Activated naive CD4-positive, alpha-beta T cell treated with anti-CD3 and anti-CD28 coated beads, Interleukin-2, amount 10 ng/mL, durations not matched to agents 7 days and 5 days (primary cell): ENCODE measurements at regions of chr11 and their contacts with region 1.

Region 1: DNA sequence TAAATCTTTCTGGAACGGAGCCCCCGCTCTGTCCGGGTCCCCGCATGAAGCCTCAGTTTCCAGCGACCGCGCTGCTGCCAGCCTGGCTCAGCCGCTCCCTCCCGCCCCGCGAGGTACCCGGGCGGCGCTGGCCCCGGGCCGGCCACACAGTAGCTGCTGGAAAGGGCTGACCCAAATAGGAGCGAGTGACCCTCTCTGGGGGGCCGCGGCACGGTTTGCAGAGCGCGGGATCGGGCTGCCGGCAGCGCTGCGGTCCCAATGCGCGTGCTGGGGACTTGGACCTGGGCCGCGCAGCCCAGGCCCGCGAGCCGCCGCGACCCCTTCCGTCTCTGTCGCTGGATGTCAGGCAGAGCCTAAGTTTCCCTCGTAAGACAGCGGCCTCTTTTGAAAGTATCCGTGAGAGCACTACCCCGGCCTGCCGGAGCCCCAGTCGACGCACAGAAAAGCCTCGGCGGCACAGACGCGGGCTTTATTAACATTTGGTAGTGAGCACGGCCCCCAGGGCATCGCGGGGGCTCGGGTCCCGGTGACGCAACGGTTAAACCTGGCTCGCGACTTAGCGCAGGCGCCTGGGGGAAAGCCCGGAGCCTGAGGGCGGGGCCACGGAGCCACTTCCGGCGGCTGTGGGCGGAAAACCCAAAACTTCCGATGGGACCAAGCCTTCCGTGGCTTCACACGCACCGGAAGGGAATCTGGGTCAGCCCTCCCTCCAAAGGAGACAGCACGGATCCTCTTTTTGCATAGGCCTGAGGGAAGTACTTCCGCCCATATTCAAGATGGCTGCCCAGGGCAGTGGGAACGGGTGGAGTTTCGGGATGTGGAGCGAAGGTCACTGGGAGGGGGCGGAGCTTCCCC is 14.9 kb downstream of the BAD start:
- DNase-seq: peak; percentile 98
- H3K4me3 Mint-ChIP-seq: peak overlapping the region; percentile 92
- H3K27ac Mint-ChIP-seq: peak overlapping the region; percentile 97
- H3K4me1 Mint-ChIP-seq: peaks cover 26% of the 10 kb centered on the region
- H3K27me3 Mint-ChIP-seq: no peaks in the 10 kb centered on the region

Region 2: DNA sequence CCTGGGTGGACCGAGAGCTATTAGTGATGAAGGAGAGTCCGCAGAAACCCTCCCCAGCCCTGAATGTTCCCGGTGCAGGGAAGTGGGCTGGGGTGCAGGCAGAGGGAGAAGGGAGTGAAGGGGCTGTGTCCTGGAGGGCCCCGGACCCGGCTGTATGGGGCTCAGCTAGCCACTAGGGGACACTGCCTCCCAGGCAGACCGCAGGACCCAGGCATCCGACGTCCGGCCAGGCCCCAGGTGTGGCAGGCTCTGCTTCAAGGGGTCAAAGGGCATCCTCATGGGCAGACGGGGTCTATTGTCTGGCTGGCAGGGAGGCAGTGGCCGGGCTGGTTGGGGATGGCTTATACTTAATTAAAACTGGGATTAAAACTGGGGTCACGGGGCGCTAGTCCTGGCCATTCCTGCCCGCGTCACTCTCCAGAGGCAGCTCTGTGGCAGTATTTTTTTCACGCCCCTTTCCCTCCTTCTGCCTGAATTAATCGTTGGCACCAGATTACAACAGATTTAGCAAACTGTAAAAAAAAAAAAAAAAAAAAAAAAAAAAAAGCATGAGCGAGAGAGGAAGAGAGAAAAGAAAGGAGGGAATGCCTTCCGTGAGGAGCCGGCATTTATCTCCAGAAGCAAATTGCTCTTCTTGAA is 228.8 kb before region 1 on chr11:
- CTCF ChIA-PET with region 1: no interaction called
- DNase-seq: no peak
- H3K4me3 Mint-ChIP-seq: no peak overlapping the region
- H3K27ac Mint-ChIP-seq: no peak overlapping the region
- H3K4me1 Mint-ChIP-seq: no peaks in the 10 kb centered on the region
- H3K27me3 Mint-ChIP-seq: peaks cover 55% of the 10 kb centered on the region

Region 3: GRCh38 chr11:64246871-64247728 is 22.5 kb before region 1 on chr11 and contains the start of gene PPP1R14B:
- CTCF ChIA-PET with region 1: interaction called, 15 read pairs
- DNase-seq: peak; percentile 89
- H3K4me3 Mint-ChIP-seq: peak within 1 kb of the TSS; percentile 92
- H3K27ac Mint-ChIP-seq: peak within 1 kb of the TSS; percentile 87
- H3K4me1 Mint-ChIP-seq: peaks cover 56% of the 10 kb centered on the region
- H3K27me3 Mint-ChIP-seq: peaks cover 15% of the 10 kb centered on the region

Region 4: GRCh38 chr11:64284048-64284961 is 14.7 kb after region 1 on chr11 and contains the start of gene BAD:
- CTCF ChIA-PET with region 1: interaction called, 15 read pairs
- DNase-seq: peak; percentile 96
- H3K4me3 Mint-ChIP-seq: peak within 1 kb of the TSS; percentile 83
- H3K27ac Mint-ChIP-seq: peak within 1 kb of the TSS; percentile 89
- H3K4me1 Mint-ChIP-seq: peaks cover 29% of the 10 kb centered on the region
- H3K27me3 Mint-ChIP-seq: peaks cover 10% of the 10 kb centered on the region